K562 (cell line): ENCODE measurements at regions of chr4 and their contacts with region 1.

Region 1: DNA sequence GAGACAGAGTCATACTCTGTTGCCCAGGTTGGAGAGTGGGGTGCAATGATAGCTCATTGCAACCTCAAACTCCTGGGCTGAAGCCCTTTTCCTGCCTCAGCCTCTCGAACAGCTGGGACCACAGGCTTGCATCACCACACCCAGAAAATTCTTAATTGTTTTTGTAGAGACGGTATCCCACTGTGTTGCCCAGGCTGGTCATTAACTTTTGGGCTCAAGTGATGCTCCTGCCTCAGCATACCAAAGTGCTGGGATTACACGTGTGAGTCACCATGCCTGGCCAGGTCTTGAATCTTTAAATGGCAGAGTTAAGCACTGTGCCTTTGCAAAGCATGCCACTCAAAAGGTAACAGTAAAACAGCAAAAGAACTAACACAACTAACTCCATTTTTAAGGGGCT is 28.6 kb upstream of the BBS12 start:
- DNase-seq: no peak
- ATAC-seq: no peak
- H3K4me3 ChIP-seq: no peak overlapping the region
- H3K27ac ChIP-seq: no peak overlapping the region
- H3K4me1 ChIP-seq: peaks cover 0 to 21% of the 10 kb centered on the region in 2 experiments; a peak in 4 of 5 replicates
- H3K27me3 ChIP-seq: no peaks in the 10 kb centered on the region; a peak in 1 of 5 replicates
- CTCF ChIP-seq: no peak
- EP300 ChIP-seq: no peak
- POLR2A ChIP-seq: no peak
- RAD21 ChIP-seq: no peak

Region 2: GRCh38 chr4:122621016-122621507 is 82.8 kb before region 1 on chr4 and contains the start of gene IL21:
- CTCF ChIA-PET with region 1: no interaction called
- POLR2A ChIA-PET with region 1: no interaction called
- in situ Hi-C with region 1: loop called (anchors 5 kb)
- intact Hi-C with region 1: no loop called
- DNase-seq: no peak
- ATAC-seq: no peak
- H3K4me3 ChIP-seq: no peak within 1 kb of the TSS
- H3K27ac ChIP-seq: no peak within 1 kb of the TSS
- H3K4me1 ChIP-seq: peaks cover 0 to 3% of the 10 kb centered on the region in 2 experiments; a peak in 2 of 5 replicates
- H3K27me3 ChIP-seq: no peaks in the 10 kb centered on the region
- CTCF ChIP-seq: no peak
- EP300 ChIP-seq: no peak
- POLR2A ChIP-seq: no peak
- RAD21 ChIP-seq: no peak
- polyA plus RNA-seq, gene IL21: not detected

Region 3: GRCh38 chr4:122692641-122693520 is 11.0 kb before region 1 on chr4:
- CTCF ChIA-PET with region 1: no interaction called
- POLR2A ChIA-PET with region 1: interaction called, 13 read pairs
- in situ Hi-C with region 1: no loop called
- intact Hi-C with region 1: no loop called
- DNase-seq: no peak
- ATAC-seq: no peak; the same call in 2 of the 3 replicates
- H3K4me3 ChIP-seq: no peak overlapping the region
- H3K27ac ChIP-seq: peak overlapping the region; percentile 33; the same call in 1 of the 3 replicates
- H3K4me1 ChIP-seq: peaks cover 4 to 31% of the 10 kb centered on the region in 2 experiments; a peak in 4 of 5 replicates
- H3K27me3 ChIP-seq: no peaks in the 10 kb centered on the region
- CTCF ChIP-seq: no peak
- EP300 ChIP-seq: no peak
- POLR2A ChIP-seq: no peak
- RAD21 ChIP-seq: no peak